Panc1 (cell line): ENCODE measurements at regions of chr9 and their contacts with region 1.

Region 1: GRCh38 chr9:89318123-89319014 is at the start of gene SECISBP2:
- DNase-seq: peak; percentile 80
- ATAC-seq: peak; percentile 97
- H3K4me3 ChIP-seq: peak within 1 kb of the TSS; percentile 47 to 63
- H3K27ac ChIP-seq: peak within 1 kb of the TSS; percentile 95
- H3K4me1 ChIP-seq: peaks cover 29% of the 10 kb centered on the region
- H3K27me3 ChIP-seq: no peaks in the 10 kb centered on the region
- CTCF ChIP-seq: peak; percentile 78
- total RNA-seq, gene SECISBP2: 17.7 TPM

Region 2: GRCh38 chr9:89179895-89180667 is 138.3 kb before region 1 on chr9:
- CTCF ChIA-PET with region 1: no interaction called
- POLR2A ChIA-PET with region 1: interaction called, 15 read pairs
- in situ Hi-C with region 1: no loop called
- intact Hi-C with region 1: no loop called
- DNase-seq: peak; percentile 63
- ATAC-seq: peak; percentile 91
- H3K4me3 ChIP-seq: peak overlapping the region; percentile 50 to 61
- H3K27ac ChIP-seq: peak overlapping the region; percentile 94
- H3K4me1 ChIP-seq: peaks cover 8% of the 10 kb centered on the region
- H3K27me3 ChIP-seq: no peaks in the 10 kb centered on the region
- CTCF ChIP-seq: no peak

Region 3: DNA sequence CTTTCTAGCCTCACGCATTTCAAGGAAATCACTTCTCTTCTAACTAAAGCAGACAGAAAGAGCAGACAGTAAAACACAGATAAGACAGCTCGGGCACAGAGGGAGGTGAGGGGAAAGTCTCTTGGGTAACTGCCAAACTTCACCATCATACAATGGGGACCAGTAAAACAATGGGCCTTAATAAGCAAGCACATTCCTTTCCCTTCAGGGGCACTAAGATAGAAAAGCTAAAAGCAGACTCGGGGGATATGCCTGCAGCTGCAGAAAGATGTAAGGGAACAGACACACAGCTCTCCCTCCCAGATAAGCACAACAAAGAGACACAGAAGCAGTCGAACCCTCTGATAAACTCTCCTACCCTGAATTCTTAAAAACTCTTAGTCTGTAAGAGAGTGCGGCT is 23.0 kb before region 1 on chr9:
- CTCF ChIA-PET with region 1: no interaction called
- POLR2A ChIA-PET with region 1: no interaction called
- in situ Hi-C with region 1: no loop called
- intact Hi-C with region 1: no loop called
- DNase-seq: no peak
- ATAC-seq: no peak
- H3K4me3 ChIP-seq: no peak overlapping the region
- H3K27ac ChIP-seq: no peak overlapping the region
- H3K4me1 ChIP-seq: no peaks in the 10 kb centered on the region
- H3K27me3 ChIP-seq: no peaks in the 10 kb centered on the region
- CTCF ChIP-seq: no peak